ENCODE measurements at regions of chrX and their contacts with region 1.

Region 1: GRCh38 chrX:144648788-144649187 is 598.5 kb upstream of the SPANXN1 start:
- DNase-seq: no peak
- H3K4me3 Mint-ChIP-seq: no peak overlapping the region
- H3K27ac Mint-ChIP-seq: no peak overlapping the region
- H3K4me1 Mint-ChIP-seq: no peaks in the 10 kb centered on the region
- H3K27me3 Mint-ChIP-seq: no peaks in the 10 kb centered on the region
- CTCF ChIP-seq: no peak

Region 2: DNA sequence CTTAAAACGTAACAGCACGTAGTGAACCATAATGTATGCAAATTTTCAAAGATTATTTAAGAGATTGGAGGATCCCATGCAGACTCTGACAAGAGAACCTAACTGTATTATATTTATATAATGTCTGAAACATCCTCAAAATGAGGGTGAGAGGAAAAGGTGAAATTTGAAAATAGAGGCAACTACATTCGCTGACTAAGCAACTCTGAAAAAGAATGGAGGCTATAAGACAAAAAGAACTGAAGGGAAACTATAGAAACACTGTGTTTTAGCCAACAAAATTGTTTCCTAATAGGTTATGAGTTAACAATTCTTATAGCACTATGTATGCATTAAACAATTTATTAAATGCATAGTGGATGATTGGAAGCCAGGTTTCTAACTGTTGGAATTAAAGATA is 116.9 kb before region 1 on chrX:
- CTCF ChIA-PET with region 1: no interaction called
- POLR2A ChIA-PET with region 1: no interaction called
- intact Hi-C with region 1: loop called (anchors 5 kb)
- DNase-seq: no peak
- H3K4me3 Mint-ChIP-seq: no peak overlapping the region
- H3K27ac Mint-ChIP-seq: no peak overlapping the region
- H3K4me1 Mint-ChIP-seq: peaks cover 12% of the 10 kb centered on the region
- H3K27me3 Mint-ChIP-seq: no peaks in the 10 kb centered on the region
- CTCF ChIP-seq: no peak

Measured in MCF 10A (cell line).